ENCODE measurements at regions of chr5 and their contacts with region 1.

Region 1: GRCh38 chr5:132490486-132491367 is at the start of gene IRF1:
- DNase-seq: peak; percentile 92 to 99
- H3K4me3 ChIP-seq: peak within 1 kb of the TSS; percentile 87 to 94
- H3K27ac ChIP-seq: peak within 1 kb of the TSS; percentile 95 to 98
- H3K4me1 ChIP-seq: peaks cover 5 to 26% of the 10 kb centered on the region in 2 donors
- H3K27me3 ChIP-seq: no peaks in the 10 kb centered on the region
- CTCF ChIP-seq: peak in 2 of 3 experiments; percentile 4 to 9
- total RNA-seq, gene IRF1: 57.7 TPM

Region 2: GRCh38 chr5:132227485-132228240 is 263.1 kb before region 1 on chr5 and contains the start of gene P4HA2:
- intact Hi-C with region 1: loop called (anchors 10 kb)
- DNase-seq: peak in 1 of 2 donors; percentile 89
- H3K4me3 ChIP-seq: peak within 1 kb of the TSS; percentile 61 to 83
- H3K27ac ChIP-seq: peak within 1 kb of the TSS; percentile 84 to 87
- H3K4me1 ChIP-seq: peaks cover 20 to 42% of the 10 kb centered on the region in 2 donors
- H3K27me3 ChIP-seq: no peaks in the 10 kb centered on the region
- CTCF ChIP-seq: peak in 2 of 3 experiments; percentile 25 to 27
- total RNA-seq, gene P4HA2: 22.6 TPM

Region 3: GRCh38 chr5:132410451-132411381 is 80.0 kb before region 1 on chr5:
- intact Hi-C with region 1: loop called (anchors 1 kb)
- DNase-seq: peak; percentile 63 to 90
- H3K4me3 ChIP-seq: peak overlapping the region; percentile 88 to 96
- H3K27ac ChIP-seq: peak overlapping the region; percentile 97 to 100
- H3K4me1 ChIP-seq: peaks cover 0 to 43% of the 10 kb centered on the region in 2 donors
- H3K27me3 ChIP-seq: no peaks in the 10 kb centered on the region
- CTCF ChIP-seq: peak; percentile 46 to 65 (median 56)

Region 4: DNA sequence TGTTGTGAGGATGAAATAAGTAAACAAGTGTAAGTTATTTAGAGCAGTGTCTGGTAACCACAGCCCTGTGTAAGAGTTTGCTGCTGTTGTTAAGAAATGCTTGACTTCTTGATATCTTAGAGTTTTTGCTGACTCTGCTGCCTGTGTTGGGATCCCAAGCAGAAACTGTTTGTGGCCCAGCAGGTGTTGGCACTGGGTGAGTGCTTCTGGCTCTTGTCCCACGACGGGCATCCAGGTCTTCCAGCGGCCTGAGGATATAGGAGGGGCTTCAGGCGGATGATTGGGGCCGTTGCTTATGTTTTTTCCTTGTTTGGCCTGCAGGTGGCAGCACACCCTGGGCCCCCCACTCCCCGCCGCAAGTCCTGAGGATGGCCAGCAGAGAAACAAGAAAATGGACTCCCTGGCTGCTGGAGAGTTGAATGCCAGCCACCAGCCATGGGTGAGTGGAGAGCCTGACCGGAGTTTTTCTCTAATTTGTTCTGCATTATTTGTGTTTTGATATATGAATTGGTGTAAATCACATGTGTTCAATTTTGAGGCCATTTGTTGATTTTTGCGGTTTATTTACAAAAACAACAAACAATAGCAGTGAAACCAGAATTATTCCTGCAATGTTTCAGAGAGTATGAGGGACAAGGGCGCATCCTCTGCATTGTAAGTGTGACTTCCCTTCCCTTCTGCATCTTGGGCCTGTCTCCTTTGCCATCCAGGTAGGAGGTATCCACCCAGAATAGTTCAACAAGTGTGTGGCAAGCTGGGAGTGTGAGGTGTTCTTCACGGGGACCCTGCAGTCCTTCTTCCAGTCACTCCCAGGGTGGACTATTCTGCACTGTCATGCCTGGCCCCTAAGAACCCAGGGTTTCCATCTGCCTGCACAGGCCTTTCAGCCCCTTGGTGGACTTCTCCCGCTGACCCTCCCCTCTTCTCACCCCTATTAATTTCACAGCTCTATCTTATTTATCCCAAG is 70.9 kb before region 1 on chr5:
- intact Hi-C with region 1: loop called (anchors 1 kb)
- DNase-seq: peak in 1 of 2 donors; percentile 78
- H3K4me3 ChIP-seq: no peak overlapping the region
- H3K27ac ChIP-seq: peak overlapping the region; percentile 75 to 76
- H3K4me1 ChIP-seq: peaks cover 19 to 68% of the 10 kb centered on the region in 2 donors
- H3K27me3 ChIP-seq: no peaks in the 10 kb centered on the region
- CTCF ChIP-seq: peak; percentile 80 to 82 (median 80)

Region 5: GRCh38 chr5:132437604-132438266 is 53.0 kb before region 1 on chr5:
- intact Hi-C with region 1: loop called (anchors 2 kb)
- DNase-seq: peak; percentile 34 to 80
- H3K4me3 ChIP-seq: no peak overlapping the region
- H3K27ac ChIP-seq: peak overlapping the region; percentile 47 to 59
- H3K4me1 ChIP-seq: peaks cover 19 to 36% of the 10 kb centered on the region in 2 donors
- H3K27me3 ChIP-seq: no peaks in the 10 kb centered on the region
- CTCF ChIP-seq: no peak

Region 6: GRCh38 chr5:132629230-132629944 is 138.7 kb after region 1 on chr5:
- intact Hi-C with region 1: no loop called
- DNase-seq: no peak
- H3K4me3 ChIP-seq: no peak overlapping the region
- H3K27ac ChIP-seq: no peak overlapping the region
- H3K4me1 ChIP-seq: no peaks in the 10 kb centered on the region
- H3K27me3 ChIP-seq: no peaks in the 10 kb centered on the region
- CTCF ChIP-seq: no peak

Region 7: DNA sequence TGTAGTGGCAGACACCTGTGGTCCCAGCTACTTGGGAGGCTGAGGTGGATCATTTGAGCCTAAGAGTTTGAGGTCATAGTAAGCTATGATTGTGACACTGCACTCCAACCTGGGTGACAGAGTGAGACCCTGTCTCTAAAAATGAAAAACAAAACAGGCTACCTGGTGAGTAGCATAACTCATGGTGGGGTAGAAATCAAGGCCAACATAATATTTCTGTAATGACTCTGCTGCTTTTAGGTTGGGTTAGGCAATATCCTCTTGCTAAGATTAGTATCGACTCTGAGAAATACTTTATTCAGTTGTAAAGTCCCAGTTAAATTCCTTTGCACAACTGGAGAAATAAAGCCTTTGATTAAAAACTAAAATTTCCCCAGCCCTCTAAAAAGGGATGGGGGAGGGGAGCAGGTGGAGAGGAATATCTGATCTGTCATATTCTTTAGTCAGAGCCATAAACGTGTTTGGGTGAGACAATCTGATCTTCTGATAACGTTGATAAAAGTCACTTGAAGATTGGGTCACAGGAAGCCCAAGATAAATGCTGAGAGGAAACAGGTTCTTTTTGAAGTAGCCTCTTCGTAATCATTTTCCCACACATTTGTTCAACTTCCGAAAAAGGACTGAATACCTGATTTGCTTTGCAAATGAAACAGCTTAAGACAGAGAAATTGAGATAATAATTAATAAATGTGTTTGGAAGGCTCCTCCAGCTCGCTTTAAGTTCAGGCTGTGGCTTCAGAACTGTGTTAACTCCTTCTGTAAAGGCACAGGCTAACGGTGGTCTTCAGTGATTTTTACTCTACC is 198.0 kb after region 1 on chr5:
- intact Hi-C with region 1: no loop called
- DNase-seq: no peak
- H3K4me3 ChIP-seq: no peak overlapping the region
- H3K27ac ChIP-seq: no peak overlapping the region
- H3K4me1 ChIP-seq: no peaks in the 10 kb centered on the region
- H3K27me3 ChIP-seq: no peaks in the 10 kb centered on the region
- CTCF ChIP-seq: no peak

Region 8: GRCh38 chr5:133041910-133042309 is 551.2 kb after region 1 on chr5:
- intact Hi-C with region 1: loop called (anchors 10 kb)
- DNase-seq: no peak
- H3K4me3 ChIP-seq: no peak overlapping the region
- H3K27ac ChIP-seq: peak overlapping the region; percentile 34 to 39
- H3K4me1 ChIP-seq: peaks cover 2 to 15% of the 10 kb centered on the region in 2 donors
- H3K27me3 ChIP-seq: no peaks in the 10 kb centered on the region
- CTCF ChIP-seq: peak in 1 of 3 experiments; percentile 16